Transverse colon (tissue), 4 donors: ENCODE measurements at regions of chr10 and their contacts with region 1.

Region 1: GRCh38 chr10:79052291-79053080 is 16.3 kb upstream of the ZMIZ1 start:
- DNase-seq: no peak
- H3K4me3 ChIP-seq: no peak overlapping the region
- H3K27ac ChIP-seq: no peak overlapping the region
- H3K4me1 ChIP-seq: peaks cover 12 to 76% (median 57%) of the 10 kb centered on the region in 4 donors
- H3K27me3 ChIP-seq: no peaks in the 10 kb centered on the region
- CTCF ChIP-seq: peak in 4 of 5 experiments; percentile 22 to 61 (median 35)
- EP300 ChIP-seq: no peak
- POLR2A ChIP-seq: no peak

Region 2: DNA sequence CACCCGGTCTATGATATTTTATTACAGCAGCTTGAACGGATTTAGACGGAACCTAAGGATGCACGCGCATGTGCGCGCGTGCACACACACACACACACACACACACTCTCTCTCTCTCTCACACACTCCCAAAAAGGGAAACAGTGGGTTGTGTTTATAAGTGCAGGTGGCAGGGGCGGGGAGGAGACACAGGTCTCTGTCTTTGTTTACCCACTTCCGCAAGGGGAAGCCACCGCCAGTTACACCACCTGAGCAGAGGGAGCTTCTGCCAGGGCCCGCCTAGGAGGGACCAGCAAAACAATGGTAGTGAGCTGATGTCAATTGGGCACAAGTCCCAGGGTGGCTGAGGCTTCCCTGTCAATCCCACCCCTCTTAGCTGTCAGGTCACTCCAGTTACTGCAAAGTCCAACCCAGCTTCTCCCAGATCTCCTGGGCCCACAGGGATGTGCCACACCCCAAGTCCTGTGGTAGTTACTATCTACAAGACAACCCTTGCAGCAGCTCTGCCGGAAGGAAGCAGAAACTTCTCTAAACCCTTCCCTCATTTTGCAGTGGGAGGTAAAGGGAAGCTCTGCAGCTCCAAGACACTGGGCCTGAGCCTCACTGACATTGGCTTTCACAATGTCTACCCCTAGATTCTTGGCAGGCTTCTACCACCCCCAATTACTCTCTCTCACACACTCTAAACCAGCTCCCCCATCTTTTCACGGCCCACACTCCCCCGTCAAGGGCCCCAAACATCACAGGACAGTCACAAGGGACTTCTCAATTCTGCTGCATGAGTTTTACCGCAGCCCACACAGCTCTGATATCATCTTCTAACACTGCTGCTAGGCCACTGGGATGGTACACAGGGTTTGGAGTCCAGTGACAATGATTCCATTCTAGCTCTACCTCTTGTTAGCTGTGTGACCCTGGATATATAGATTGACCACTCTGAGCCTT is 1135.3 kb after region 1 on chr10:
- in situ Hi-C with region 1: no loop called
- intact Hi-C with region 1: loop called (anchors 5 kb)
- DNase-seq: peak; percentile 83
- H3K4me3 ChIP-seq: peak overlapping the region in 1 of 4 donors; percentile 2
- H3K27ac ChIP-seq: peak overlapping the region; percentile 80 to 87 (median 82)
- H3K4me1 ChIP-seq: peaks cover 59 to 82% (median 67%) of the 10 kb centered on the region in 4 donors
- H3K27me3 ChIP-seq: no peaks in the 10 kb centered on the region
- CTCF ChIP-seq: no peak
- EP300 ChIP-seq: no peak
- POLR2A ChIP-seq: no peak